Heart right ventricle (tissue), 16 donors: ENCODE measurements at regions of chr10 and their contacts with region 1.

Region 1: DNA sequence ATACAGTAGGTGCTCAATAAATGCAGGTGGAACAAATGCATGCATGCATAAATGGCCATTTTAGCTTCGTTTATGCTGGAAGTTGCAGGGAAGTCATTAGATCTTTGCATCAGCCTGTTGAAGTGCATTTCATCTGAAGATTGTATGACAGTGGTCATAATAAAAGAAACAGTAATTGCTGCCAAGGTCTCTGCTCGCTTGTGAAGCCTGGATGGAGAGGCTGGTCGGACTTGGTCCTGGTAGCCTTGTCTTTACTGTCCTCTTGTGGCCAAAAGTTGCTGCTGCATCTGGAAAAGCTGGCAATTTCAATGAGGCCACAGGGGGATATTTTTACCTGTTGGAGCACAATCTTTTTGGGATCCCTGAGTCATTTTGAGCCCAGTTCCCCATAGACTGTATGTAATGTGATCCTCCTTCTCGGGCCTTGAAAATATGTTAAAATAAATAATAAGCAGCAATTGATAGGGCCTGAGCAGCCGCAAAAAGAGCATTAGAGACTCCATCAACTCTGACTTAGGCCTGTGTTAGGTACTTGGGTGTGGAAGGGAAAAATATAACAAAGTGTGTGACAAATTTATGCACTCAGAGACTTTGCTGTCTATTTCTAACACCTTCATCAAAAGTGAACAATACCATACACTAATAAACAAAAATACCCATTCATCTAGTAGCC is 31.6 kb upstream of the HABP2 start:
- DNase-seq: peak; percentile 29 to 68
- ATAC-seq: peak; percentile 73 to 89 (median 84)
- H3K4me3 ChIP-seq: no peak overlapping the region
- H3K27ac ChIP-seq: no peak overlapping the region
- H3K4me1 ChIP-seq: peaks cover 0 to 14% (median 5%) of the 10 kb centered on the region in 9 donors
- H3K27me3 ChIP-seq: peaks cover 0 to 4% (median 0%) of the 10 kb centered on the region in 7 donors
- CTCF ChIP-seq: peak; percentile 85 to 97 (median 93)

Region 2: GRCh38 chr10:113099431-113100293 is 421.6 kb before region 1 on chr10:
- intact Hi-C with region 1: no loop called
- DNase-seq: no peak
- ATAC-seq: peak in 5 of 8 donors; percentile 23 to 38 (median 26)
- H3K4me3 ChIP-seq: no peak overlapping the region
- H3K27ac ChIP-seq: peak overlapping the region in 1 of 10 donors; percentile 31
- H3K4me1 ChIP-seq: peaks cover 0 to 62% (median 44%) of the 10 kb centered on the region in 9 donors
- H3K27me3 ChIP-seq: no peaks in the 10 kb centered on the region
- CTCF ChIP-seq: no peak

Region 3: DNA sequence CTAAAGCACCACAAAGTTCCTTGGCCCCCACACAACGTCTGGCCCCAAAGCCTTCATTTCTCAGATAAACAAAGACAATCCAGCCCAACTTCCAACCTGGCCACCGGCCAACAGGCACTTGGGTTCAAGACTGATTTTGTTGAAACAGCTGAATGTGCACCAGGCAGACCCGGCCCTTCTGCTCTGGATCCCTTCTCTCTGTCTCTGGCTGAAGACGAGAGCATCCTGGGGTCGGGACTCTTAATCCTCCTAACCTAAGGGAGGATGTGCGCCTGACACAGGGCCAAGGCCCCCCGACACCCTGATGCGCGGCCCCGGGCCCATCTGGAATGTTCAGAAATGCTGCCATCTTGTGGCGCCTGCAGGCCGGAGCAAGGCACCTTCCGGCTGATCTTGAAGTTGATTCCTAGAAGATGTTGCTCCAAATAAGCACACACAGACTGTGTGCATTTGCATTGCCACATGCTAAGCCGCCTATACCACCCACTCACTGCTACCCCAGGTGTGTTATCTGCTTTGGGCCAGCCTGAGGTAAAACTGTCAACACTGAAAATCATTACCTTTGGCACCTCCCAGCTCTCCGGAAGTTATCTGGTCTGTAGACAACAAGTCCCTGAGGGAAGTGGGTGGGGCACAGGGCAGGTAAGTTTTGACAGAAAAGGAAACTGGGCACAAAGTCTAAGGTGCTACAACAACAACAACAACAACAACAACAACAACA is 66.8 kb before region 1 on chr10:
- intact Hi-C with region 1: loop called in 1 of 10 experiments (anchors 5 kb)
- DNase-seq: peak; percentile 27 to 40
- ATAC-seq: peak in 7 of 8 donors; percentile 50 to 69 (median 61)
- H3K4me3 ChIP-seq: peak overlapping the region in 2 of 10 donors; percentile 14 to 15
- H3K27ac ChIP-seq: no peak overlapping the region
- H3K4me1 ChIP-seq: peaks cover 0 to 7% (median 0%) of the 10 kb centered on the region in 9 donors
- H3K27me3 ChIP-seq: peaks cover 0 to 32% (median 19%) of the 10 kb centered on the region in 7 donors
- CTCF ChIP-seq: peak; percentile 18 to 72 (median 63)

Region 4: GRCh38 chr10:113475381-113475807 is 45.9 kb before region 1 on chr10:
- intact Hi-C with region 1: no loop called
- DNase-seq: no peak
- ATAC-seq: peak in 6 of 8 donors; percentile 7 to 70 (median 62)
- H3K4me3 ChIP-seq: no peak overlapping the region
- H3K27ac ChIP-seq: peak overlapping the region in 1 of 10 donors; percentile 37
- H3K4me1 ChIP-seq: peaks cover 0 to 26% (median 14%) of the 10 kb centered on the region in 9 donors
- H3K27me3 ChIP-seq: no peaks in the 10 kb centered on the region
- CTCF ChIP-seq: no peak